Motor neuron (in vitro differentiated cells): ENCODE measurements at regions of chr10 and their contacts with region 1.

Region 1: DNA sequence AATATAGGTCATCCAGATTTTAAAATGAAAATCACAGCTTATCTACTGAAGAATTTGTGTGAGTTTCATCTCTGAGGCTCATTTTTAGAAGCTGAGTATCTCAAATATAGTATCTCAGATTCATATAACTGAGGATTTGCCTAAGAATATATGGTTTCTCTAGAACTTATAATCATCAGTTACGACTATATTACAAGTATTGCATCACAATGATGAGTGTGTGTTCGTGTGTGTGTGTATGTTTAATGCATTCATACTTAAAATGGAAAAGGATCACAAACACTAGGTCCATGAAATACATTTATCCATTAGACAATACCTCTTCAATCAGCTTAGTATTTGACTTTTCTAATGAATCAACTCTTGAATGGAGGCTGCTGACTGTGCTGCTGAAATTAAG is 21.3 kb downstream of the RUFY2 start:
- ATAC-seq: no peak
- H3K4me3 ChIP-seq: no peak overlapping the region
- H3K27ac ChIP-seq: no peak overlapping the region
- H3K4me1 ChIP-seq: no peaks in the 10 kb centered on the region

Region 2: DNA sequence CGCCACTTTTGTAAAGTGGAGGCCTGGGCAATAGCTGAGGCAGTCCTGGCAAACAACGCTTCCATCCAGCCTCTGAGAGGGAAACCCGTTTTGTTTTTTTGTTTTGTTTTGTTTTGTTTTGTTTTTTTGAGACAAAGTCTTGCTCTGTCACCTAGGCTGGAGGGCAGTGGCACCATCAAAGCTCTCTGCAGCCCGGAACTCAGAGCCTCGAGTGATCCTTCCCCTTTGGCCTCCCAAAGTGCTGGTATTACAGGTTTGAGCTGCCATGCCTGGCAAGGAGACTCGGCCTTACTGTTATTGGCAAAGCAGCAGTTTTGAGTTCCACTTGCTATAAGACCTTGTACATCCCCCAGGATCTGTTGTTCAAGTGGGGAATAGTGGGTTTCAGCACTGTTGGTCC is 152.1 kb after region 1 on chr10:
- in situ Hi-C with region 1: no loop called
- ATAC-seq: no peak
- H3K4me3 ChIP-seq: no peak overlapping the region
- H3K27ac ChIP-seq: no peak overlapping the region
- H3K4me1 ChIP-seq: no peaks in the 10 kb centered on the region

Region 3: DNA sequence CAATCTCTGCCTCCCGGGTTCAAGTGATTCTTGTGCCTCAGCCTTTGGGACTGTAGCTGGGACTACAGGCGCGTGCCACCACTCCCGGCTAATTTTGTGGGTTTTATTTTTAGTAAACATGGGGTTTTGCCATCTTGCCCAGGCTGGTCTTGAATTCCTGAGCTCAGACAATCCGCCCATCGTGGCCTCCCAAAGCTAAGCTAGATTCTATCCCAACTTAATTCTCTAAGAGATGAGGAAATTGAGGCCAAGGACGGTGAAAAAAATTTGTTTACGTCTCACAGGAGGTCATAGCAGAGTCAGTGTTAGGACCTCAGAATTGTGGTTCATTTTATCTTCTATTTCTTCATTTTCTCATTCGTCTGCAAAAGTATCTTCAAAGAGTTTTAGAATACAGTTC is 341.4 kb after region 1 on chr10:
- in situ Hi-C with region 1: loop called in 1 of 9 experiments (anchors 25 kb)
- ATAC-seq: no peak
- H3K4me3 ChIP-seq: no peak overlapping the region
- H3K27ac ChIP-seq: no peak overlapping the region
- H3K4me1 ChIP-seq: peaks cover 0 to 4% of the 10 kb centered on the region in 2 donors

Region 4: GRCh38 chr10:68752711-68753350 is 367.1 kb after region 1 on chr10:
- in situ Hi-C with region 1: loop called in 2 of 9 experiments (anchors 25 kb)
- ATAC-seq: no peak
- H3K4me3 ChIP-seq: no peak overlapping the region
- H3K27ac ChIP-seq: no peak overlapping the region
- H3K4me1 ChIP-seq: no peaks in the 10 kb centered on the region